Activated CD4-positive, alpha-beta T cell treated with anti-CD3 and anti-CD28 coated beads for 36 hours (primary cell): ENCODE measurements at regions of chr5 and their contacts with region 1.

Region 1: DNA sequence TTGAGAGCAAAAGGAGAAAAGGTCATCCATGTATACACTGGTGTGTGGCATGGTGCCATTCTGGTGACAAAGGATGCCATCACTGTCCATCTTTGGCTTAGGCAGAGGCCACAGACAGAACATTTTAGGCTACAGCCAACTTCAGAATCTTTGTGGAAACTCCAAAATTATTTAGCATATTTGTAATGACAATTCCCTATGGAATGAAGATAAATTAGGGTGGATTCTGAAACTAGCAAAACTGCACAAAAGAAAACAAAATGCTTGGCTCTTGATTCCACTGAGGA is 92.5 kb downstream of the FBXW11 start:
- DNase-seq: no peak
- ATAC-seq: no peak
- H3K4me3 Mint-ChIP-seq: no peak overlapping the region
- H3K27ac Mint-ChIP-seq: peak overlapping the region; percentile 83
- H3K4me1 Mint-ChIP-seq: peaks cover 44% of the 10 kb centered on the region
- H3K27me3 Mint-ChIP-seq: no peaks in the 10 kb centered on the region

Region 2: GRCh38 chr5:170655476-170655875 is 1258.5 kb before region 1 on chr5:
- CTCF ChIA-PET with region 1: no interaction called
- POLR2A ChIA-PET with region 1: no interaction called
- intact Hi-C with region 1: no loop called
- DNase-seq: no peak
- ATAC-seq: no peak
- H3K4me3 Mint-ChIP-seq: no peak overlapping the region
- H3K27ac Mint-ChIP-seq: no peak overlapping the region
- H3K4me1 Mint-ChIP-seq: no peaks in the 10 kb centered on the region
- H3K27me3 Mint-ChIP-seq: peaks cover 3% of the 10 kb centered on the region

Region 3: DNA sequence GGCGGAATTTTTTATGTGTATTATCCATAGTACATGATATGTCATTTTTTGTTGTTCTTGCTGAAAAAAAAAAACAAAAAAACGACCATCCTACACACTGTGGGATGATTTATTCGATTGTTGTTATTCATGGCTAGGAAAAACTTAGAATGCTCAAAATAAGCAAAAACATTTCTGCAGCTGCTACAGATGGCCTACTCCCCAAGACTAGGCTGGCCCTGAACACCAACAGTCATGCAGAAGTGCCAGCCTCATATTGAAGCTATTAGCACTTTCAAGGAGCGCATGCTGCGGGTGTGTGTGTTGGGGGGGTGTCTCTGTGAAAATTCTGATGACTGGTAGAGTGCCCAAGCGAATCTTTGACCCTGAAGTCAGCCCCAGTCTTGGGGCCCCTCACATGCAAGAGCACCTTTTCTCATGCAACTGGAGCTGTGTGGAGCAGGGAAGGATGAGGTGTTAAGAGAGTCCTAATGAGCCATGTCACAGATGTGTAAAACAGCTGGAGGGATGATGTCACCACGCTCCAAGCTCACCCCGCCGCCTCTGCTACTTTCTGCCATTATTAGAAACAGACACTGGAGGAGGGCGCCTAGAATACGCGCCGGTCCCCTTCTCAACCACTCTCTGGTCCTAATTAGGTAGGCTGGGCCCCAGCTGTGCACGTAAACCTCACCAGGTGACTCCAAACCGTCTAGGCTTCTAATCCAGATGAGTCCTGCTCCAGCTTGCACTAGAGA is 189.3 kb before region 1 on chr5:
- CTCF ChIA-PET with region 1: no interaction called
- POLR2A ChIA-PET with region 1: no interaction called
- intact Hi-C with region 1: no loop called
- DNase-seq: no peak
- ATAC-seq: no peak
- H3K4me3 Mint-ChIP-seq: no peak overlapping the region
- H3K27ac Mint-ChIP-seq: no peak overlapping the region
- H3K4me1 Mint-ChIP-seq: peaks cover 2% of the 10 kb centered on the region
- H3K27me3 Mint-ChIP-seq: peaks cover 15% of the 10 kb centered on the region

Region 4: DNA sequence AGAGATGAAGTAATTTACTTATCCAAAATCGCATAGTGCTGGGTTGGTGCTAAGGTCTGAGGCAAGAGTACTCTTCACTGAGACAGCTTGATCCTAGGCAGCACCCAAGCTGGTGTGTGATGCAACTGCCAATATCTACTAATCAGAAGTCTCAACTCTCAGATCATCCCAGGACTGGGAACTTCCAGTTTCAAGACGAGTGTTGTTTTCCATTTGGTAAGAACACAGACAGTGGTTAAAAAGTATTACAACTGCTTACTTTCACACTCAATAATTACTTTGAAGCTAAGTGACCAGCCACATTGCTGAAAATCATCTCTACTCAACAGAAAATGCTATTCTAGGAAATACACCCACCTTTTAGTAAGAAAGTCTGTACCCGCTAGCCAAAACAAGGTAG is 47.2 kb after region 1 on chr5:
- CTCF ChIA-PET with region 1: interaction called, 15 read pairs
- POLR2A ChIA-PET with region 1: no interaction called
- intact Hi-C with region 1: no loop called
- DNase-seq: peak; percentile 65
- ATAC-seq: peak; percentile 64
- H3K4me3 Mint-ChIP-seq: no peak overlapping the region
- H3K27ac Mint-ChIP-seq: peak overlapping the region; percentile 72
- H3K4me1 Mint-ChIP-seq: peaks cover 92% of the 10 kb centered on the region
- H3K27me3 Mint-ChIP-seq: no peaks in the 10 kb centered on the region

Region 5: GRCh38 chr5:172006321-172007174 is 92.6 kb after region 1 on chr5 and contains the start of gene FBXW11:
- CTCF ChIA-PET with region 1: interaction called, 57 read pairs
- POLR2A ChIA-PET with region 1: interaction called, 7 read pairs
- intact Hi-C with region 1: loop called (anchors 1 to 2 kb)
- DNase-seq: peak; percentile 97
- ATAC-seq: peak; percentile 85
- H3K4me3 Mint-ChIP-seq: peak within 1 kb of the TSS; percentile 92
- H3K27ac Mint-ChIP-seq: peak within 1 kb of the TSS; percentile 98
- H3K4me1 Mint-ChIP-seq: peaks cover 43% of the 10 kb centered on the region
- H3K27me3 Mint-ChIP-seq: no peaks in the 10 kb centered on the region
- total RNA-seq, gene FBXW11: 33.8 to 39.5 TPM

Region 6: GRCh38 chr5:172035039-172035438 is 121.1 kb after region 1 on chr5:
- CTCF ChIA-PET with region 1: interaction called, 55 read pairs
- POLR2A ChIA-PET with region 1: no interaction called
- intact Hi-C with region 1: loop called (anchors 1 kb)
- DNase-seq: peak; percentile 26
- ATAC-seq: peak; percentile 70
- H3K4me3 Mint-ChIP-seq: no peak overlapping the region
- H3K27ac Mint-ChIP-seq: no peak overlapping the region
- H3K4me1 Mint-ChIP-seq: peaks cover 14% of the 10 kb centered on the region
- H3K27me3 Mint-ChIP-seq: no peaks in the 10 kb centered on the region

Region 7: DNA sequence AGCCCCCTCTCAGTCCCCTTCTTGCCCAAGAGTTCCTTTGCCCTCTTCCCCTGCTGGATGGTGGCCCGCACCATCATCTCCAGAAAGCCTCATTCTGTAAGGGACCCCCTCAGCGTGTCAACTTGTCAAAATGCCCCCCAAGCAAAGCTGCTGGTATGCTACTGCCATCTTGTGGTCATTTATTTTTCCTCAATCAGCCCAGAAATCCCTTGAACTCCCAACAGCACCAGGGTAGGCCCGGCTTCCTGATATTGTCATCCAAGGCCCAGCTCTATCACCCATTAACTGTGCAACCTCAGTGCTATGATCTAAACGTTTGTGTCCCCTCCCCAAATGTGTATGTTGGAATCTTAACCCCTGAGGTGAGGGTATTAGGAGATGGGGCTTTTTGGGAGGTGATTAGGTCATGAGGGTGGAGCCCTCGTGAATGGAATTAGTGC is 145.8 kb after region 1 on chr5:
- CTCF ChIA-PET with region 1: interaction called, 31 read pairs
- POLR2A ChIA-PET with region 1: no interaction called
- intact Hi-C with region 1: loop called in 1 of 2 experiments (anchors 1 kb)
- DNase-seq: no peak
- ATAC-seq: no peak
- H3K4me3 Mint-ChIP-seq: no peak overlapping the region
- H3K27ac Mint-ChIP-seq: no peak overlapping the region
- H3K4me1 Mint-ChIP-seq: peaks cover 31% of the 10 kb centered on the region
- H3K27me3 Mint-ChIP-seq: no peaks in the 10 kb centered on the region

Region 8: DNA sequence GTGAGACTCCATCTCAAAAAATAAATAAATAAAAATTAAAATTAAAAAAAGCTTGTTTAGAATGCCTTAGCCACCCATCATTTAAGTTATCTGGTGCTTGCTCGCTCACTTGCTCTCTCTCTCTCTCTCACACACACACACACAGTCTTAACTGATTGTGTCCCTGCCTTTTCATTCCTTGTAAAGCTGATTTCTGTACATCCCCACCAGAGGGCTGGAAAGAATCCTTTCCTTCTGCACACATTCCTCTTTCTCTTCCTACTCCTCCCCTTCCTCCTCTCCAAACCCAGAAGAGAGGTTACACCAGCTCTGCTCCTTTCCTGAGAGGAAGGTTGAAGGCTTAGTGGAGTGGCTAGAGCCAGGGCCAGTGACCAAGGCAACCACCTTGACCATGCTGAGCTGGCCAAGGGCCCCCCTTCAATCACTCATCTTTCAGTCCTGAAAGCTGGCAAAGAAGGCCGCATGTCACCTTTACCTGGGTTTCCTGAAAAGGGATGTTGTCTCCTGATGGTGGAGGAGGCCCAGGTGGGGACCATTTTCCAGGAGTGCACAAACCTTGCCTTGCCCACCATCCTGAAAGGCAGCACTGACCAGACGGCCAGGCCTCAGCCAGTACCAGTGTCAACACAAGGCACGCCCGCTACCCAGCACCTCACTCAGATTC is 248.5 kb after region 1 on chr5:
- CTCF ChIA-PET with region 1: no interaction called
- POLR2A ChIA-PET with region 1: no interaction called
- intact Hi-C with region 1: no loop called
- DNase-seq: no peak
- ATAC-seq: no peak
- H3K4me3 Mint-ChIP-seq: no peak overlapping the region
- H3K27ac Mint-ChIP-seq: peak overlapping the region; percentile 51
- H3K4me1 Mint-ChIP-seq: peaks cover 66% of the 10 kb centered on the region
- H3K27me3 Mint-ChIP-seq: no peaks in the 10 kb centered on the region